Activated B cell treated with CpG ODN at 0.5 μM for 24 hours (primary cell): ENCODE measurements at regions of chr15 and their contacts with region 1.

Region 1: GRCh38 chr15:78108299-78109084 is 16.1 kb downstream of the SH2D7 start:
- DNase-seq: peak; percentile 72
- ATAC-seq: peak; percentile 95
- H3K4me3 Mint-ChIP-seq: no peak overlapping the region
- H3K27ac Mint-ChIP-seq: no peak overlapping the region
- H3K4me1 Mint-ChIP-seq: peaks cover 5% of the 10 kb centered on the region
- H3K27me3 Mint-ChIP-seq: no peaks in the 10 kb centered on the region
- CTCF ChIP-seq: no peak

Region 2: GRCh38 chr15:77507911-77508310 is 600.6 kb before region 1 on chr15:
- CTCF ChIA-PET with region 1: no interaction called
- POLR2A ChIA-PET with region 1: no interaction called
- intact Hi-C with region 1: no loop called
- DNase-seq: no peak
- ATAC-seq: no peak
- H3K4me3 Mint-ChIP-seq: no peak overlapping the region
- H3K27ac Mint-ChIP-seq: no peak overlapping the region
- H3K4me1 Mint-ChIP-seq: peaks cover 28% of the 10 kb centered on the region
- H3K27me3 Mint-ChIP-seq: no peaks in the 10 kb centered on the region
- CTCF ChIP-seq: no peak

Region 3: DNA sequence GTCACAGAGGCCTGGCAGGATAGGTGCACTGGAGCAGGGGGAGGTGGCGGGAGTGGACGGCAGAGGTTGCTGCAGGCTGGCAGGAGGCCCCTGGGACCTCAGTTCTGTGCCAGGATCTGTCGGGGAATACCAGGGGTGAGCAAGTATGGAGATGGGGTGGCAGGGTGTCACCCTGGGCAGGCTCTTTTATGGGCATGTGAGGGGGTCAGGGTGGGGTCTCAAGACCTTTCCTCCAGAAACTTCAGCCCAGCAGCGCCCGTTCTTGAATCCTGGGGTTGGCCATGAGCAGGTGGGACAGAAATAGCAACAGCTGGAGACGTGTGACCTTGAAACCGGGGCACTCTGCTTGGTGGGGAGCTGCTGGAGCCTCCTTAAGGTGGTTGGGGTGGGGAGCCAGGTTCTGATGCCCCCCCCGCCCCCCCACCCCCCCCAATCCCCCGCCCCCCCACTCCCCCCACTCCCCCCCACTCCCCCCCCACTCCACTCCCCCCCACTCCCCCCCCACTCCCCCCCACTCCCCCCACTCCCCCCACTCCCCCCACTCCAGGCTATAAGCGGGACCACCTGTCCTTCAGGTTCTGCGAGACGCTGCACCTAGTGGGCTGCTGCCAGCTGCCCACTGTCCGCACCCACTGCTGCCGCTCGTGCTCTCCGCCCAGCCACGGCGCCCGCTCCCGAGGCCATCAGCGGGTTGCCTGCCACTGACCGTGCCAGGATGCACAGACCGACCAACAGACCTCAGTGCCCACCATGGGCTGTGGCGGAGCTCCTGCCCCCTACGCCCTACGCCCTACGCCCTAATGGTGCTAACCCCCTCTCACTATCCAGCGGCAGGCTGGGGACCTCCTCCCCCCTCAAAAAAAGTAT is 115.9 kb before region 1 on chr15:
- CTCF ChIA-PET with region 1: interaction called, 14 read pairs
- POLR2A ChIA-PET with region 1: no interaction called
- intact Hi-C with region 1: no loop called
- DNase-seq: no peak
- ATAC-seq: no peak
- H3K4me3 Mint-ChIP-seq: no peak overlapping the region
- H3K27ac Mint-ChIP-seq: peak overlapping the region; percentile 66
- H3K4me1 Mint-ChIP-seq: peaks cover 48% of the 10 kb centered on the region
- H3K27me3 Mint-ChIP-seq: no peaks in the 10 kb centered on the region
- CTCF ChIP-seq: no peak

Region 4: DNA sequence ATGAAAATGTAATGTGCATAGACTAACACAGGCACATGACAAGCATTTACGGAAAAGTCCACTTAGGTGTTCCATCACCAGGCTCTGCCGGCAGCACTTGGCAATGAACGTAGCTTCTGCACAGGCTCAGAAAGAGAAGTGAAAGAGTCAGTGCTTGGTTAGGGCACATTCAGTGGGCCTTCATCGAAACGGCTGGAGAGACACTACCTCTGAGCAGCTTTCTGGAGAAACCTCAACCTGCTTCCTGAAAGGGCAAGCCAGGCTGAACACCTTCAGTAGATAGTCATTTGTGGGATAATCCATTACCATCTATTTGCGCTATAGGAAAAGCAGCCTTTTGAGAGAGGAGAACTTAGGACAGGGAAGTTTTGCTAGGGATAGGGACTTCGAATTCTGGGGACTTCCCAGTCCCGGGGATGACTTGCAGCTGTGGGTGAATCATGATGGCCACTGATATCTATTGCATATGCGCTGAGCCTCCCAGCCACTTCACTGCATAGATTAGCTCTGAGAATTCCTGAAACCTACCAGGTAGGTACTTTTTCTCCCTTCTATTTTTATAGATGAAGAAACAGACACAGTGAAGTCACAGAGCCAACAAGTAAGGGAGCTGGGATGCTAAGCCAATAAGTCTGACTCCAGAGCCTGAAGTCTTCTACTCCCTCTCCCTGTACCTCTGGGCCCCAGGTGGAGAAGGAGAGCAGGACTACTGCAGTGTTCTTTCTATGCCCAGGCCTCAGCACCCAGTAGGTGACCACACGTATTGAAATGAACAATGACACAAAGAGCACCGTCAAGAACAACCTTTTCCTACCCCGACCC is 20.3 kb before region 1 on chr15:
- CTCF ChIA-PET with region 1: interaction called, 15 read pairs
- POLR2A ChIA-PET with region 1: no interaction called
- intact Hi-C with region 1: no loop called
- DNase-seq: no peak
- ATAC-seq: peak; percentile 95
- H3K4me3 Mint-ChIP-seq: peak overlapping the region; percentile 56
- H3K27ac Mint-ChIP-seq: peak overlapping the region; percentile 79
- H3K4me1 Mint-ChIP-seq: peaks cover 18% of the 10 kb centered on the region
- H3K27me3 Mint-ChIP-seq: peaks cover 5% of the 10 kb centered on the region
- CTCF ChIP-seq: no peak

Region 5: GRCh38 chr15:78195735-78196201 is 87.3 kb after region 1 on chr15:
- CTCF ChIA-PET with region 1: interaction called, 191 read pairs
- POLR2A ChIA-PET with region 1: interaction called, 8 read pairs
- intact Hi-C with region 1: loop called (anchors 1 kb)
- DNase-seq: peak; percentile 59
- ATAC-seq: peak; percentile 90
- H3K4me3 Mint-ChIP-seq: no peak overlapping the region
- H3K27ac Mint-ChIP-seq: no peak overlapping the region
- H3K4me1 Mint-ChIP-seq: no peaks in the 10 kb centered on the region
- H3K27me3 Mint-ChIP-seq: no peaks in the 10 kb centered on the region
- CTCF ChIP-seq: peak; percentile 23

Region 6: GRCh38 chr15:78709263-78709882 is 600.9 kb after region 1 on chr15:
- CTCF ChIA-PET with region 1: no interaction called
- POLR2A ChIA-PET with region 1: no interaction called
- intact Hi-C with region 1: loop called (anchors 1 kb)
- DNase-seq: peak; percentile 62
- ATAC-seq: peak; percentile 99
- H3K4me3 Mint-ChIP-seq: no peak overlapping the region
- H3K27ac Mint-ChIP-seq: no peak overlapping the region
- H3K4me1 Mint-ChIP-seq: peaks cover 6% of the 10 kb centered on the region
- H3K27me3 Mint-ChIP-seq: peaks cover 31% of the 10 kb centered on the region
- CTCF ChIP-seq: no peak